ENCODE measurements at regions of chr1 and their contacts with region 1.

Region 1: GRCh38 chr1:116390195-116390594 is 17.2 kb downstream of the ATP1A1 start:
- DNase-seq: no peak
- H3K4me3 ChIP-seq: no peak overlapping the region
- H3K27ac ChIP-seq: no peak overlapping the region
- H3K4me1 ChIP-seq: no peaks in the 10 kb centered on the region
- H3K27me3 ChIP-seq: peaks cover 0 to 1% (median 0%) of the 10 kb centered on the region in 4 experiments; a peak in 1 of 7 replicates
- CTCF ChIP-seq: no peak
- EP300 ChIP-seq: no peak
- POLR2A ChIP-seq: no peak
- RAD21 ChIP-seq: no peak

Region 2: DNA sequence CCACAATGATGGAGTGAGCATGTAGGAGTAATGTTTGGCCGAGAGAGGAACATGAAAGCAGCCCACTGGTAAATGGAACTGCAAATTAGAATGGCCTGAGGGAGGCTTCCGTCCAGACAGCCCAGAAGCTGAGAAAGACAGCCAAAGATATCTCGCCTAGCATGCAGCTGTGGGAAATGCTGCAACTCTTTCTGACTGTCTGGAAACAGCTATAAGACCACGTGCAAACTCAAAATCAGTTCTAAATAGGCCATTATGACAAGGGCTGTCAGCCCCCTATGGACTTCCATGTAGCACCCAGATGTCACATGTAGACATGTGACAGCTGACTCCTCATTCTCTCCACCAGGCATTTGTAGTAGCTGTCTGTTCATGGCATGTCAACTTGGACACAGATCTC is 80.0 kb before region 1 on chr1:
- CTCF ChIA-PET with region 1: no interaction called
- POLR2A ChIA-PET with region 1: no interaction called
- DNase-seq: no peak
- H3K4me3 ChIP-seq: no peak overlapping the region
- H3K27ac ChIP-seq: no peak overlapping the region
- H3K4me1 ChIP-seq: peaks cover 3 to 10% (median 8%) of the 10 kb centered on the region in 4 experiments
- H3K27me3 ChIP-seq: no peaks in the 10 kb centered on the region
- CTCF ChIP-seq: no peak
- EP300 ChIP-seq: no peak
- POLR2A ChIP-seq: no peak
- RAD21 ChIP-seq: no peak

Region 3: GRCh38 chr1:116352349-116352813 is 37.8 kb before region 1 on chr1:
- CTCF ChIA-PET with region 1: no interaction called
- POLR2A ChIA-PET with region 1: no interaction called
- DNase-seq: no peak
- H3K4me3 ChIP-seq: no peak overlapping the region
- H3K27ac ChIP-seq: no peak overlapping the region
- H3K4me1 ChIP-seq: peaks cover 0 to 5% (median 0%) of the 10 kb centered on the region in 4 experiments; a peak in 2 of 7 replicates
- H3K27me3 ChIP-seq: no peaks in the 10 kb centered on the region
- CTCF ChIP-seq: no peak
- EP300 ChIP-seq: no peak
- POLR2A ChIP-seq: no peak
- RAD21 ChIP-seq: no peak

Region 4: GRCh38 chr1:116405241-116406135 is 15.3 kb after region 1 on chr1:
- CTCF ChIA-PET with region 1: interaction called, 12 read pairs
- POLR2A ChIA-PET with region 1: interaction called, 6 read pairs
- DNase-seq: no peak
- H3K4me3 ChIP-seq: no peak overlapping the region
- H3K27ac ChIP-seq: no peak overlapping the region
- H3K4me1 ChIP-seq: no peaks in the 10 kb centered on the region
- H3K27me3 ChIP-seq: peaks cover 0 to 1% (median 0%) of the 10 kb centered on the region in 4 experiments; a peak in 1 of 7 replicates
- CTCF ChIP-seq: no peak
- EP300 ChIP-seq: no peak
- POLR2A ChIP-seq: no peak
- RAD21 ChIP-seq: no peak

Region 5: GRCh38 chr1:116624040-116624439 is 233.8 kb after region 1 on chr1:
- CTCF ChIA-PET with region 1: no interaction called
- POLR2A ChIA-PET with region 1: no interaction called
- DNase-seq: no peak
- H3K4me3 ChIP-seq: no peak overlapping the region
- H3K27ac ChIP-seq: no peak overlapping the region
- H3K4me1 ChIP-seq: peaks cover 1 to 11% (median 8%) of the 10 kb centered on the region in 4 experiments; a peak in 5 of 7 replicates
- H3K27me3 ChIP-seq: no peaks in the 10 kb centered on the region
- CTCF ChIP-seq: no peak
- EP300 ChIP-seq: no peak
- POLR2A ChIP-seq: no peak
- RAD21 ChIP-seq: no peak

Measured in H1 (cell line).